ENCODE measurements at regions of chr3 and their contacts with region 1.

Region 1: GRCh38 chr3:81643721-81644120 is 117.7 kb downstream of the GBE1 start:
- DNase-seq: no peak
- H3K4me3 ChIP-seq: no peak overlapping the region
- H3K27ac ChIP-seq: no peak overlapping the region
- H3K4me1 ChIP-seq: no peaks in the 10 kb centered on the region
- H3K27me3 ChIP-seq: no peaks in the 10 kb centered on the region
- CTCF ChIP-seq: peak in 1 of 3 experiments; percentile 39

Region 2: DNA sequence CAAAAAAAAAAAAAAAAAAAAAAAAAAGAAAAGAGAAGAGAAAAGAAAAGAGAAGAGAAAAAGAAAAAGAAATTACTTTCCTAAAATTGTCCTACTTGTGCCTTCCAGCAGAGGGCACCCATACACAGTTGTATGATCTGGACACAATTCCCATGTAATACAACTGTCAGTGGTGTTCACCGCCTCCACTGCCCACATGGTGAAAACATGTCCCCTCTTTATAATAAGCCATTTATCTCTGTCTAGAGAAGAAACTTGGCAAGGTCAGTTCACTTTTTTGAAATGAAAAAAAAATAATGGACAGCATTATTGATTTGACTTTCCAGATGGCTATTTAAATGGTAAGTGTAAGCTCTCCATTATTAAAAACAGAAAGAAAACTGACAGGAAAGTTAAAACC is 341.7 kb before region 1 on chr3:
- intact Hi-C with region 1: loop called (anchors 5 kb)
- DNase-seq: no peak
- H3K4me3 ChIP-seq: no peak overlapping the region
- H3K27ac ChIP-seq: no peak overlapping the region
- H3K4me1 ChIP-seq: no peaks in the 10 kb centered on the region
- H3K27me3 ChIP-seq: no peaks in the 10 kb centered on the region
- CTCF ChIP-seq: peak in 2 of 3 experiments; percentile 47 to 60

Region 3: DNA sequence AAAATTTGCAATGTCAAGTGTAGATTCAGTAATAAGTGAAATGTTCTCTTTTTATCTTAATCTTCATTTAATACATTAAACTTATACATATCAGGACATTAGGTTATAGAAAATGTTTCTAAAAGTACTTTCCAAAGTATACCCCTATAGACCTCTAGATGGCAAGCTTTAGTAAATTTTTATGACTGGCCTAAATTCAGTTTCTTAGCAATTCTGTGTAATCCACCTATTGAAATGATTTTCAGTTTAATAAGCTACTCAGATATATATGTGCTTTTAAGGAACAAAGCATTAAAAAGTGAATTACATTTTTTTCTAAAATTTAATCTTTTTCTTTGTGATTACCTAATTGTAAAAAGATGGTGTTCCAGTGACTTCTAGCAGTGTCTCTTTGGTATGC is 224.5 kb before region 1 on chr3:
- intact Hi-C with region 1: loop called (anchors 5 kb)
- DNase-seq: no peak
- H3K4me3 ChIP-seq: no peak overlapping the region
- H3K27ac ChIP-seq: no peak overlapping the region
- H3K4me1 ChIP-seq: no peaks in the 10 kb centered on the region
- H3K27me3 ChIP-seq: no peaks in the 10 kb centered on the region
- CTCF ChIP-seq: peak in 2 of 3 experiments; percentile 39 to 64